Breast epithelium (tissue), 4 donors: ENCODE measurements at regions of chr3 and their contacts with region 1.

Region 1: GRCh38 chr3:50687127-50687751 is 12.5 kb downstream of the DOCK3 start:
- DNase-seq: no peak
- H3K4me3 ChIP-seq: no peak overlapping the region
- H3K27ac ChIP-seq: no peak overlapping the region
- H3K4me1 ChIP-seq: no peaks in the 10 kb centered on the region
- H3K27me3 ChIP-seq: no peaks in the 10 kb centered on the region
- CTCF ChIP-seq: no peak
- POLR2A ChIP-seq: no peak

Region 2: GRCh38 chr3:50665641-50666040 is 21.6 kb before region 1 on chr3:
- intact Hi-C with region 1: loop called (anchors 2 kb)
- DNase-seq: no peak
- H3K4me3 ChIP-seq: no peak overlapping the region
- H3K27ac ChIP-seq: no peak overlapping the region
- H3K4me1 ChIP-seq: no peaks in the 10 kb centered on the region
- H3K27me3 ChIP-seq: no peaks in the 10 kb centered on the region
- CTCF ChIP-seq: no peak
- POLR2A ChIP-seq: no peak